CD4-positive, alpha-beta memory T cell (primary cell): ENCODE measurements at regions of chr18 and their contacts with region 1.

Region 1: GRCh38 chr18:59308248-59308937 is 10.1 kb downstream of the CPLX4 start:
- DNase-seq: peak; percentile 38 to 65 (median 53)
- H3K4me3 ChIP-seq: peak overlapping the region in 1 of 2 donors; percentile 43
- H3K4me3 Mint-ChIP-seq: peak overlapping the region; percentile 42 to 78 (median 66)
- H3K27ac ChIP-seq: no peak overlapping the region
- H3K27ac Mint-ChIP-seq: no peak overlapping the region
- H3K4me1 ChIP-seq: peaks cover 11% of the 10 kb centered on the region
- H3K4me1 Mint-ChIP-seq: peaks cover 0 to 2% (median 0%) of the 10 kb centered on the region in 4 donors
- H3K27me3 ChIP-seq: peaks cover 6% of the 10 kb centered on the region
- H3K27me3 Mint-ChIP-seq: peaks cover 24 to 41% of the 10 kb centered on the region in 2 donors

Region 2: GRCh38 chr18:58937071-58937886 is 371.1 kb before region 1 on chr18:
- CTCF ChIA-PET with region 1: no interaction called
- POLR2A ChIA-PET with region 1: no interaction called
- intact Hi-C with region 1: no loop called
- DNase-seq: no peak
- H3K4me3 ChIP-seq: no peak overlapping the region
- H3K4me3 Mint-ChIP-seq: no peak overlapping the region
- H3K27ac ChIP-seq: no peak overlapping the region
- H3K27ac Mint-ChIP-seq: no peak overlapping the region
- H3K4me1 ChIP-seq: no peaks in the 10 kb centered on the region
- H3K4me1 Mint-ChIP-seq: no peaks in the 10 kb centered on the region
- H3K27me3 ChIP-seq: no peaks in the 10 kb centered on the region
- H3K27me3 Mint-ChIP-seq: peaks cover 4 to 6% of the 10 kb centered on the region in 2 donors

Region 3: GRCh38 chr18:59318460-59319050 is 10.2 kb after region 1 on chr18 and contains the start of gene CPLX4:
- CTCF ChIA-PET with region 1: interaction called, 22 read pairs
- POLR2A ChIA-PET with region 1: no interaction called
- intact Hi-C with region 1: no loop called
- DNase-seq: no peak
- H3K4me3 ChIP-seq: no peak within 1 kb of the TSS
- H3K4me3 Mint-ChIP-seq: no peak within 1 kb of the TSS
- H3K27ac ChIP-seq: no peak within 1 kb of the TSS
- H3K27ac Mint-ChIP-seq: no peak within 1 kb of the TSS
- H3K4me1 ChIP-seq: no peaks in the 10 kb centered on the region
- H3K4me1 Mint-ChIP-seq: no peaks in the 10 kb centered on the region
- H3K27me3 ChIP-seq: no peaks in the 10 kb centered on the region
- H3K27me3 Mint-ChIP-seq: peaks cover 1 to 5% of the 10 kb centered on the region in 2 donors
- total RNA-seq, gene CPLX4: not detected

Region 4: DNA sequence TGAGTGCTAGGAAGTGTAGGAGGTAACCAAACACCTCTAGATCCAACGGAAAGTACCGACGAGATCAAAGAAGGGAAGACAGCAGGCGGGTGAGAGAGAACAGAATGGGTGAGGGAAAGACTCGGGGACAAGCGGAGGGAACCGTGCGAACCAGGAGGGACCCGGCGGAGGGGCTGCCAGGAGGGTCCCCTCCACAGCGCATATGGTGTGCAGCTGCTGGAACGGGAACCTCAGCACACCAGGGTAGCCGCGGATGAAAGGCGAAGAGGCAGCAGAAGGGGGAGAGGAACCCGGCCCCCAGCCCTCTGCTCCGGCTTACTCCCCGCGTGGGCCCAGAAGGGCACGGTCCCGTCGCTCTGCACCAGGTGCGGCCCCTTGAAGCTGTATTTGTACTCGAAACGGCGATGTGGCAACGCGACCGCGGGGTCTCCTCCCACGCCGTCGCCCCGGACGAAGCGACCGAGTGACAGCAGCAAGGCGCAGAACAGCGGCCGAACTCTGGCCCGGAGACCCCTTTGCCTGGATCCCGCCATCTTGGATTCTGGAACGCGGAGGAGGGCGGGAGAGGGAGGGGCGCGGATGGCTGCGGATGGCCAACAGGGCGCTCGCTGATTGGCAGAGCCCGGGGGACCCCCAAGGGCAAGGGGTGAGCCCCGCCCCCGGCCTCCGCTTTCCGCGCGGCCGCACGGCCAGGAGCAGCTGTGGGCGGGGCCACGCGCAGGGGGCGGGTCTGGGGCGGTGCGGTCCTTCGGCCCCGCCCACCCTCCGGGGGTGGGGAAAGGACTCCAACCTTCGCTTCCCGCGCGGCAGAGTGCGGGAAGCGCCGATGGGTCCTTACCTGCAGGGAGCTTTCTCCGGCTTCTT is 50.6 kb after region 1 on chr18 and contains the start of gene LMAN1:
- CTCF ChIA-PET with region 1: interaction called, 10 read pairs
- POLR2A ChIA-PET with region 1: no interaction called
- intact Hi-C with region 1: no loop called
- DNase-seq: peak; percentile 85 to 88 (median 87)
- H3K4me3 ChIP-seq: peak within 1 kb of the TSS; percentile 76 to 92
- H3K4me3 Mint-ChIP-seq: peak within 1 kb of the TSS; percentile 91 to 100 (median 98)
- H3K27ac ChIP-seq: peak within 1 kb of the TSS; percentile 95
- H3K27ac Mint-ChIP-seq: peak within 1 kb of the TSS; percentile 91 to 99 (median 97)
- H3K4me1 ChIP-seq: peaks cover 38% of the 10 kb centered on the region
- H3K4me1 Mint-ChIP-seq: peaks cover 23 to 52% (median 35%) of the 10 kb centered on the region in 4 donors
- H3K27me3 ChIP-seq: no peaks in the 10 kb centered on the region
- H3K27me3 Mint-ChIP-seq: peaks cover 0 to 2% of the 10 kb centered on the region in 2 donors
- total RNA-seq, gene LMAN1: 55.7 to 59.6 TPM

Region 5: GRCh38 chr18:59395226-59396110 is 87.1 kb after region 1 on chr18:
- CTCF ChIA-PET with region 1: interaction called, 262 read pairs
- POLR2A ChIA-PET with region 1: no interaction called
- intact Hi-C with region 1: no loop called
- DNase-seq: no peak
- H3K4me3 ChIP-seq: no peak overlapping the region
- H3K4me3 Mint-ChIP-seq: peak overlapping the region in 1 of 8 donors; percentile 11
- H3K27ac ChIP-seq: no peak overlapping the region
- H3K27ac Mint-ChIP-seq: peak overlapping the region in 1 of 7 donors; percentile 26
- H3K4me1 ChIP-seq: no peaks in the 10 kb centered on the region
- H3K4me1 Mint-ChIP-seq: peaks cover 4 to 12% (median 6%) of the 10 kb centered on the region in 4 donors
- H3K27me3 ChIP-seq: peaks cover 5% of the 10 kb centered on the region
- H3K27me3 Mint-ChIP-seq: peaks cover 14 to 23% of the 10 kb centered on the region in 2 donors

Region 6: DNA sequence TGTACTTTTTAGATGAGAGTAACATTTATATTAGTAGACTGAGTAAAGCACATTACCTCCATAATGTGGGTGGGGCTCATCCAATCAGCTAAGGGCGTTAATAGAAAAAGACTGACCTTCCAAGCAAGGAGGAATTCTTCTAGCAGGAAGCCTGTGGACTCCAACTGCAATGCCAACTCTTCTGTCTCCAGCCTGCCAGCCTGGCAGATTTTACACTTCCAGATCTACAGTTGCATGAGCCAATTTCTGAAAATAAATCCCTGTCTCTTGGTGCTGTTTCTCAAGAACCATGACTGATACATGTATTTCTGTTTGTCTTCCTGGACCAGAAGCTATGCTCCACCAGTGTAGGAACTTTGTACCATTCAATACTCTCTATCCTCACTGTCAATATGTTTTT is 119.6 kb after region 1 on chr18:
- CTCF ChIA-PET with region 1: no interaction called
- POLR2A ChIA-PET with region 1: no interaction called
- intact Hi-C with region 1: no loop called
- DNase-seq: no peak
- H3K4me3 ChIP-seq: no peak overlapping the region
- H3K4me3 Mint-ChIP-seq: no peak overlapping the region
- H3K27ac ChIP-seq: no peak overlapping the region
- H3K27ac Mint-ChIP-seq: no peak overlapping the region
- H3K4me1 ChIP-seq: no peaks in the 10 kb centered on the region
- H3K4me1 Mint-ChIP-seq: no peaks in the 10 kb centered on the region
- H3K27me3 ChIP-seq: no peaks in the 10 kb centered on the region
- H3K27me3 Mint-ChIP-seq: peaks cover 3 to 4% of the 10 kb centered on the region in 2 donors

Region 7: DNA sequence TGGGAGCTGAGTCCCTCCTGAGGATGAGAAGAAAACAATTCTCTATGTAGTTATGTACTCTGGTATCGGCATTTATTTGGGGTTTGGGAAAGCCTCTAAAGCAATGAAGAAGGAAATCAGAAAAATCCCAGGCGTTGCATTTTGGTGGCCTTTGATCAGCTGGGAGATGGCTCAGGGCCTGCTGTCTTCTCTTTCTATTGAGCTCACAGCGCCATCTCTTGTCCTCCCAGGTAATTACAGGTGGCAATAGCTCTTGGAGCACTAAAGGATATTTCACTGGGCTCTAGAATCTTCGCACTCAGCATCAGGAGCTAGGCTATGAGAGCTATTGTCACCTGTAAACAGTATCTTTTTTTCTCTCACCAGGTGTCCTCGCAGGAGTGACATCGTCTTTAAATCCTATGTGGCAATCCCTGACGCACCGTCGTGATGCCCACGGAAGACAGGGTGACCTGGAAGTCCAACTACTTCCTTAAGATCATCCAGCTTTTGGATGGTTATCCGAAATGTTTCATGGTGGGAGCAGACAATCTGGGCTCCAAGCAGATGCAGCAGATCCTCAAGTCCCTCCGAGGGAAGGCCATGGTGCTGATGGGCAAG is 515.3 kb after region 1 on chr18:
- CTCF ChIA-PET with region 1: no interaction called
- POLR2A ChIA-PET with region 1: no interaction called
- intact Hi-C with region 1: loop called (anchors 5 kb)
- DNase-seq: no peak
- H3K4me3 ChIP-seq: no peak overlapping the region
- H3K4me3 Mint-ChIP-seq: no peak overlapping the region
- H3K27ac ChIP-seq: no peak overlapping the region
- H3K27ac Mint-ChIP-seq: no peak overlapping the region
- H3K4me1 ChIP-seq: no peaks in the 10 kb centered on the region
- H3K4me1 Mint-ChIP-seq: peaks cover 0 to 1% (median 0%) of the 10 kb centered on the region in 4 donors
- H3K27me3 ChIP-seq: no peaks in the 10 kb centered on the region
- H3K27me3 Mint-ChIP-seq: peaks cover 5 to 10% of the 10 kb centered on the region in 2 donors